ENCODE measurements at regions of chr6 and their contacts with region 1.

Region 1: GRCh38 chr6:3052481-3053230 is 15.6 kb upstream of the RIPK1 start:
- DNase-seq: no peak
- H3K4me3 ChIP-seq: no peak overlapping the region
- H3K27ac ChIP-seq: no peak overlapping the region
- H3K4me1 ChIP-seq: peaks cover 16% of the 10 kb centered on the region
- H3K27me3 ChIP-seq: no peaks in the 10 kb centered on the region
- CTCF ChIP-seq: no peak

Region 2: DNA sequence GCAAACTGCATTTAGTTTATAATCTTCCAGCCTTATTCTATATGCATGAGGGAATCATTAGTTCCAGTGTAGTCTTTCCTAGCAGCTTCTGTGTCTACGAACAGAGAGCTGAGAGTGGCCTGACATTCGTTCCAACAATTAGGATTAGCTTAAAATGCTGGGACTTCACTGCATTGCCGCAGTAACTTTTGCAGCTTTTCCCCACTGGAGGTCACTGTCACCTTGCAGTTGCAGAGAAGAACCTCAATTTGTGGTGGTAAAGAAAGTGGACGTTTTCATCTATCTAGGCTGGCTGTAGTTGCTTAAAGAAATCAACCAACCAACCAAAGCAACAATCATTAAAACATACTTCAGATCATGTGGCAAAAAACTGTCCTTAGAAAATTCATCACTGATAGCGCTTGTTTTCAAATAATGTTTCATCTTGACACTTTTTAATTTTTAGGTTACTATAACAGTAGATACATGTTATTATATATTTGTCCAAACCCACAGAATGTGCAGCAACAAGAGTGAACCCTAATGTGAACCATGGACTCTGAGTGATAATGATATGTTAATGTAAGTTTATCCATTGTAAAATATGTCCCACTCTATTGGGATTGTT is 314.2 kb before region 1 on chr6:
- CTCF ChIA-PET with region 1: no interaction called
- POLR2A ChIA-PET with region 1: interaction called, 3 read pairs
- intact Hi-C with region 1: loop called (anchors 2 kb)
- DNase-seq: peak; percentile 88
- H3K4me3 ChIP-seq: no peak overlapping the region
- H3K27ac ChIP-seq: no peak overlapping the region
- H3K4me1 ChIP-seq: no peaks in the 10 kb centered on the region
- H3K27me3 ChIP-seq: no peaks in the 10 kb centered on the region
- CTCF ChIP-seq: peak; percentile 91

Region 3: DNA sequence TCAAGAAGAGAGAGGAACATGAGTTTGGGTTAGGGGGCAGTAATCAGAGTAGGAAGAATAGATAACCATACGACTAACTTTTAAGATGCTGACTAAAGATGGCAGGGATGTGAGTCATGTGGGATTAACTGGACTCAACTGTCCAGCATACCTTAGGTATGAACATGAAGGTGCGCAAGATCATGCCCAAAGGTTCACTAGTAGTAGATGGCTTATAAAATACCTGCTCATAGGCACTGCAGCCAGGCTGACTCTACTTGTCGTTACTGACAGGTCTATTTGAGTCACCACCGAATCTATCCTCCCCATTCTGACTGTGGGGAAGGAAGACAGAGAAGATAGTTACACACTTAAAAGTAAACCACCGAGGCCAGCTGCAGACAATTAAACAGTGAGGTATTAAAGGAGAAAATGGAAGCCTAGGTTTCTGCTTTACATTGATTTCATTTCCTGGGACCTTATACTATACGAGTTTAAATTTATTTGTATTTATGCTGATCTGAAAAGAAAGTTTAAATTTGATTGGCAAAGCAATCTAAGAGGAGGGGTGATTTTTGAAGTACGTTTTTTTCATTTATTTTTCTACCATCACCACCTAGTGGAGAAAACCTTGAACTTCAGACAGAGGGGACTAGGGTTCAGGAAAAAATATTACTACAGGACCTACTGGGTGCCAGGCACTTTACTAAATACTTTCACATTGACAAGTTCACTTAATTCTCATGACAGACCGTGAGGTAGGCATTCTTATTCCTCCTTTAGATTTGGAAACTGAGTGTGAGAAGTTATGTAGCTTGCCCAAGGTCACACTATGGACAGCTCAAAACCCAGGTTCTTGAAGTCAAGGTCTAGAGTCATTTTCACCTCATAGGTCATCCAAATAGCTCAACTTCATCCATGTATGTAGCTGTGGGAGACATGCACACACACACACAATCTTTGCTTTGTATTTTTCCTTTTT is 291.5 kb before region 1 on chr6:
- CTCF ChIA-PET with region 1: no interaction called
- POLR2A ChIA-PET with region 1: no interaction called
- intact Hi-C with region 1: no loop called
- DNase-seq: peak; percentile 22
- H3K4me3 ChIP-seq: no peak overlapping the region
- H3K27ac ChIP-seq: no peak overlapping the region
- H3K4me1 ChIP-seq: peaks cover 4% of the 10 kb centered on the region
- H3K27me3 ChIP-seq: no peaks in the 10 kb centered on the region
- CTCF ChIP-seq: peak; percentile 56

Region 4: DNA sequence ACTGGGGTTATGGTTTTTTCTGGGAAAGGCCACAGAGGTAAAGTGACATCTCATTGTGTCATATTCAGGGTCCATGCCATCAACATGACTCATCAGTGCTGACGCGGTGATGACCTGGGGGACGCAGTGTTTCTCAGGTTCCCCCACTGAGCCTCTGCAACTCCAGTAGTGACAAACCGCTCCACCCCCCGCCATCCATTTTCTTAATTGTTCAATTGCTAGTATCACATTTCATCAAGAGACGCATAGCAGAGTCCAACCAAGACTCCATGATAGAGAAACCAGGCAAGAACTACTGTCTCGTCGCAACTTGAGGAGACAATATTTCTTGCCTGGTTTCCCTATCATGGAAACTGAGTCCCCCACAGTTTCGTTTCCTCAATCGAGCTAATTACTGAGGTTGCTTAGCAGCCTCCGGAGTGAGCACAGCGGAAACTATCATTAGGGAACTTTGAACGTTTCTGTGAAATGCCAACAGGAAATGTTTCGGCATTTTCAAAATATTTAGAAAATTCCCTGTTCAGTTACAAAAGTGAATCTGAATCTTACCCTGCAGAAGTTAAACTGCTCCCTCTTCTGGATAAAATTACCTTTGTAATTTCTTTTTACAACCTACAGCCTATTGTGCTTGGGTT is 198.8 kb before region 1 on chr6:
- CTCF ChIA-PET with region 1: no interaction called
- POLR2A ChIA-PET with region 1: no interaction called
- intact Hi-C with region 1: loop called (anchors 5 kb)
- DNase-seq: peak; percentile 96
- H3K4me3 ChIP-seq: peak overlapping the region; percentile 39
- H3K27ac ChIP-seq: peak overlapping the region; percentile 96
- H3K4me1 ChIP-seq: peaks cover 46% of the 10 kb centered on the region
- H3K27me3 ChIP-seq: no peaks in the 10 kb centered on the region
- CTCF ChIP-seq: peak; percentile 57

Region 5: GRCh38 chr6:2952557-2953095 is 100.0 kb before region 1 on chr6:
- CTCF ChIA-PET with region 1: interaction called, 5 read pairs
- POLR2A ChIA-PET with region 1: no interaction called
- intact Hi-C with region 1: loop called (anchors 5 kb)
- DNase-seq: peak; percentile 89
- H3K4me3 ChIP-seq: no peak overlapping the region
- H3K27ac ChIP-seq: no peak overlapping the region
- H3K4me1 ChIP-seq: peaks cover 5% of the 10 kb centered on the region
- H3K27me3 ChIP-seq: no peaks in the 10 kb centered on the region
- CTCF ChIP-seq: peak; percentile 100

Region 6: DNA sequence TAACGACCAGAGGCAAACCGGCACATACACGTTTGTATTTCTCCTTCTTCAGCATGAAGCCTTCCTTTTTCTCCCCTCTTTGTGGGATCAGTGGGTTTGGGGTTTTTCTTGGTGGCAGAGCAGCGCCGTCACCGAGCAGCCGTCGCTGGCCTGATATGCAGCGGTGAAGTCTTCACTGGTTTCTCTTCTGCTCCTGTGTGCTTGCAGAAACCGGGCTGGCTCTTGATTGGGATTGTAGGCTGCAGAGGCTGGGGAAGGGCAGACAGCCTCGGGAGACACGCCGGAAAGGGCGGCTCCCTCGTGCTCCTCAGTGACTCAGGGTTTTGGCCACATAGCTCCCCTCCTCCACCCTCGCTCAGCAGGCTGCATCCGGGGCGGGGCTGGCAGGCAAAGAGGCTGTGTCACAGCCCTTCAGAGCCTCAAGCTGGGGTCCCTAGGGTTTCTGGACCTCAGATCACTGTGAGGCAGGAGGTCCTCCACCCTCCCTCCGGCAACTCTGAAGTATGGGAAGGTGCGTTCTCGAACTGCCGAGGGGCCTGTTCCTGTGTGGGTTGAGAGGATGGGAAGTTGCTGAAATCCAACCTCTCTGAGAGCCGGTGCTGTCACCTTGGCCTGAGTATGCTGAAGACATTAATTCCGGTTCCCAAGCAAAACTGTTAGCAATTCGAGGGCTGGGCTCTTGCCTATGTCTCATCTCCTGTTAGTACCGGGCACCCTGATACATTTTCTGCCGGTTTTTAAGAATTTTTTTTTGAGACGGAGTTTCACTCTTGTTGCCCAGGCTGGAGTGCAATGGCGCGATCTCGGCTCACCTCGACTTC is 28.8 kb before region 1 on chr6:
- CTCF ChIA-PET with region 1: interaction called, 3 read pairs
- POLR2A ChIA-PET with region 1: interaction called, 3 read pairs
- intact Hi-C with region 1: loop called (anchors 1 kb)
- DNase-seq: peak; percentile 99
- H3K4me3 ChIP-seq: peak overlapping the region; percentile 58
- H3K27ac ChIP-seq: peak overlapping the region; percentile 91
- H3K4me1 ChIP-seq: peaks cover 38% of the 10 kb centered on the region
- H3K27me3 ChIP-seq: no peaks in the 10 kb centered on the region
- CTCF ChIP-seq: no peak

Region 7: DNA sequence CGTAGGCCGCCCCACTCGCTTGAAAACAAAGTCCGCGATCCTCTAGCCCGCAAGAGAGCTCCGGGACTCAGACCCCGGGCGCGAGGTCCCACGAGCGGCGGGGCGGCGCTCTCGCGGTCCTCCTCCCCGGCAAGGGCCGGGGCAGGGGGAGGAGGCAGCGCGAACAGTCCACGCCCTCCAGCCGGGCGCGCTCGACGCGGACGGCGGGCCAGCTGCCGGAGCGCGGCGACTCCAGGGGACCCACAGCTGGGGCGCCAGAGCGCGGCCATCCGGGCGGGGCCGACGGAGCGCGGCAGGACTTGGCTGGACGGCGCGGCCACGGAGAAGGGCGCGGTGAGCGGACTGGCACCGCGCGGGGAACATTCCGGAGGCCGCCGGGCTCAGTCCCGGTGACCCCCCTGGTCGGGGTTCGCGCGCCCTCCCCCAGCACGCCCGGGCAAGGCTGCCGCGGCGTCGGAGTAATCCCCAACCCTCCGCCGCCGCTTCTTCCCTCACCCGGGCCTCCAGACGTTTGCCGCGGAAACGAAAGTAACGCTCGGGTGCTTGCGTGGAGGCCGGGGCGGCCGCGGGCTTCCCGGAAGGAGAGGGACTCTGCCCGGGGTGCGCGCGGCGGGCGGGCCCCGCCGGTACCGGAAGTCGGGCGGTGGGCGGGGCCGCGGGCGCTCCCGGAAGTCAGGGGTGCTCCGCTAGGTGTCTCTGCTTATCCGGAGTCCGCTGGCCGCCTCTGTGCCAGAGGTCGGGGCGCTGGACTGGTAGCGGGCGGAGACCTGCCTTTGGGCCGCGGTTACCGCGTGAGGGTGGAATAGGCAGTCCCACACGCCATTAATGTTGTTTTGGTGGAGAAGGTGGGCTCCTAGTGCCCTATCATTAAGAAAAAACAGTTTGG is 15.9 kb after region 1 on chr6 and contains the start of gene RIPK1:
- CTCF ChIA-PET with region 1: no interaction called
- POLR2A ChIA-PET with region 1: interaction called, 10 read pairs
- intact Hi-C with region 1: no loop called
- DNase-seq: peak; percentile 92
- H3K4me3 ChIP-seq: peak within 1 kb of the TSS; percentile 96
- H3K27ac ChIP-seq: peak within 1 kb of the TSS; percentile 99
- H3K4me1 ChIP-seq: peaks cover 11% of the 10 kb centered on the region
- H3K27me3 ChIP-seq: no peaks in the 10 kb centered on the region
- CTCF ChIP-seq: peak; percentile 41
- total RNA-seq, gene RIPK1: 11.4 and 15.0 TPM in 2 replicates

Region 8: GRCh38 chr6:3244003-3244831 is 191.6 kb after region 1 on chr6:
- CTCF ChIA-PET with region 1: no interaction called
- POLR2A ChIA-PET with region 1: no interaction called
- intact Hi-C with region 1: no loop called
- DNase-seq: no peak
- H3K4me3 ChIP-seq: no peak overlapping the region
- H3K27ac ChIP-seq: no peak overlapping the region
- H3K4me1 ChIP-seq: no peaks in the 10 kb centered on the region
- H3K27me3 ChIP-seq: no peaks in the 10 kb centered on the region
- CTCF ChIP-seq: no peak